ENCODE measurements at regions of chr3 and their contacts with region 1.

Region 1: GRCh38 chr3:37967260-37967881 is 23.2 kb upstream of the VILL start:
- DNase-seq: peak; percentile 71
- CTCF ChIP-seq: peak; percentile 84

Region 2: DNA sequence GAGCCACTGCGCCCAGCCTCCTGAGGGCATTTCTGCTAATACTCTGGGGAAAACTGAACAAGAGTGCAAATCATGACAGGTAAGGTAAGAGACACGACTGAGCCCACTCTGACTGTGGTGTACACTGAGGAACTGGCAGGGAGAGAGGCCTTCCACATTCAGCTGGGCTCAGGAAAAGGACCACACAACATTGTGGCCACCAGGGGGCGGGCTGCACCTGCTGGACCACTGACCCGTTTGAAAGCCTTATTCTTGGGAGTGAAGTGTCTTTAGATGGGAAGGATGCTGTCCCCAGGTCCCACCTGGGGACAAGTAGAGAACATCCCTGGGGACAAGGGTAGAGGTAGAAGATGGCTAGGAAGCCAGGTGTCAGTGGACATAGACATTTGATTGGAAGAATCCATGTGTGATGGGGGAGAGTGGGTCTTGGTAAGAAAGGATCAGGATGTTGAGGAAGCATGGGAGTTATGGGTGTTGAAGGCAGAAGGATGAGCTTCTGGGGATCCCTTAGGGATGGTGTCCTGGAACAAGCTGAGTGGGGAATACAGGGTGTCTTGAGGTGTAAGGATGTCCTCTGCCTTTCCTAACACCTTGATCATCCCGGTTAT is 111.9 kb before region 1 on chr3:
- CTCF ChIA-PET with region 1: interaction called, 331 read pairs
- POLR2A ChIA-PET with region 1: no interaction called
- DNase-seq: peak; percentile 75
- CTCF ChIP-seq: peak; percentile 85

Region 3: GRCh38 chr3:37872413-37873160 is 94.8 kb before region 1 on chr3:
- CTCF ChIA-PET with region 1: interaction called, 12 read pairs
- POLR2A ChIA-PET with region 1: no interaction called
- DNase-seq: no peak
- CTCF ChIP-seq: no peak

Region 4: GRCh38 chr3:37924453-37924852 is 42.9 kb before region 1 on chr3:
- CTCF ChIA-PET with region 1: no interaction called
- POLR2A ChIA-PET with region 1: no interaction called
- DNase-seq: no peak
- CTCF ChIP-seq: no peak

Region 5: DNA sequence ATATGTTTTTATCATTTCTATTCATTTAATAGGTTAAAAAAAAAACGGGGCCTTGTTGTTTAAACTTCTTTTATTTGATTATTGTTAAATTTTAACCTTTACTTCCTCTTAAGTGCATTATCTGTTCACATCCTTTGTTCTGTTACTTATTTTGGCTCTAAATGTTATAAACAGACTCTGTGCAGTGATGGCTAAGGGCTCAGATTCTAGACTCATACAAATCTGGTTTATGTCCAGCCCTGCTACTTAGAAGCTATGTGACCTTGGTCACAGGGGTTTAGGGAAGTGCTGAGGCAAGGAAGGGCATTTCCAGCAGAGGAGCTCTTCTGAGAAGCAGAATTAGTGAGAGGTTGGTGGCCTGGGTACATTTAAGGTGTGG is 32.1 kb before region 1 on chr3:
- CTCF ChIA-PET with region 1: interaction called, 14 read pairs
- POLR2A ChIA-PET with region 1: no interaction called
- DNase-seq: no peak
- CTCF ChIP-seq: no peak

Region 6: DNA sequence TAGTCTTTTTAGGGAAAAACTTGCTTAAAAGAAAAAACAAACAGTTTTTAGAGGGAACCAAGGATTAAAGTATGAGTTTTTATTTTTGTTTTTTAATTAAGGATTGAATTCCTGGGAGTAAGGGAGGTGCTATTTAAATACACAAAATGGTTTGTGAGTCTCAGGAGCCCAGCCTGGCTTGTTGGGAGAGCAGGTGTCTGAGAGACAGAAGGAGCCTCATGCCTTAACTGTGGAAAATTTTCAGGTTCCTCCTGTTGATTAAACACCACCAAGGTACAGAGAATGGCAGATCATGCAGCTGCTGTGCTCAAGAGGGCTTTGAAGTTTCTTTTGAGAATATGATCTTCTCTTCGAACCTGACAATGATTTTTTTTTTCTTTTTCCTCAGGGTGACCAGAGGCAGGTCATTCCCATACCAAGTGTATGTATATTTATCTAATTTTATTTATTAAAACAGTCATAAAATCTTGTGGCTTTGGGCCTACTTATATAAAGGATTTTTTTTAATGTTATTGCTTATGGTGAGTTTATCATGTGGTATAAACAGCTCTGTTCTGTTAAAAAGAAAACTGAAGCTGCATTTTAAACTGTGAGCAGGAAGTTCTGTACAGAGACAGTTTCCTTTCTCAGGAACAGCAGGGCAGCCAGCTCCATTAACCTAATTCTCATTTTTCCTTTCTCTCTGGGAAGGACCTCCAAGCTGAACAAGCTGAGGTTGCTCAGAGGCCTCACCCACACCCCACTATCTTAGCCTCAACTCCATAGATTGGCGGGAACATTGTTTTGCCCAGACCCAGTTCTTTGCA is 10.4 kb before region 1 on chr3:
- CTCF ChIA-PET with region 1: interaction called, 84 read pairs
- POLR2A ChIA-PET with region 1: no interaction called
- DNase-seq: no peak
- CTCF ChIP-seq: no peak

Region 7: DNA sequence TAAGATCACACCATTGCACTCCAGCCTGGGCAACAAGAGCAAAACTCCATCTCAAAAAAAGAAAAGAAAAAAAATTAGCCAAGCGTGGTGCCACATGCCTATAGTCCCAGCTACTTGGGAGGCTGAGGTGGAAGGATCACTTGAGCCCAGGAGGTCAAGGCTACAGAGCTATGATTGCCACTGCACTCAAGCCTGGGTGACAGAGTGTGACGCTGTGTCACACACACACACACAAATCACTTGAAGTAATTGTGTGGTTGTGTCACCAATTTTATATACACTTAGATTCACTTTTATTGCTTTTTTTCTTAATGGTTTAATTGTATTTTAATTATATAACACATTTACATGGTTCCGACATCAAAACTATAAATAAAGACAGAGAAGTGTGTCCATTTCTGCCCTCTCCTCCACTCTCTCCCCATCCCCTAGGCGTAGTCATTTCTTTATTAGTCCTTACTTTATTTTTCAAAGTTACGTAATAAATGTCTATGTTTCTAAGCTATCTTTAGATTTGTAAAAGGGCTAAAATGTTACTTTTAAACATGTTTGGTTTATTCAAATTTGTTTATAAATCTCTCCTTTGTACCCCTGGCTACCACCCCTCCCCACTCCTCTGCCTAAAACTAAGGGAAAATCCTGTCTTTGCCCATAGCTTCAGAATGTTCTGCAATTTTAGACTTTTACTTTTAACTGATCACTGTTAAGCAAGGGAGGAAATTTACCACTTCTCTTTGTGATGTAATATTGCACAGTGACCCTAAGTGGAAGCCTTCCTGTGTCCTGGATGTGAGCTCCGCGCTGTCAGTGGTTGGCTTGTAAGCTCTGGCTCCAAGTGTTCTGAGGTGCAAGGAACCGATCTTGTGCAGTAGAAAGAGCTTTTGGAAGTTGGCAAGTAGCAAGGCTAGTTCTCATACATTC is 12.4 kb after region 1 on chr3:
- CTCF ChIA-PET with region 1: interaction called, 84 read pairs
- POLR2A ChIA-PET with region 1: no interaction called
- DNase-seq: no peak
- CTCF ChIP-seq: no peak

Region 8: GRCh38 chr3:37996785-37997301 is 29.5 kb after region 1 on chr3:
- CTCF ChIA-PET with region 1: interaction called, 11 read pairs
- POLR2A ChIA-PET with region 1: no interaction called
- DNase-seq: peak; percentile 78
- CTCF ChIP-seq: peak; percentile 90

Region 9: DNA sequence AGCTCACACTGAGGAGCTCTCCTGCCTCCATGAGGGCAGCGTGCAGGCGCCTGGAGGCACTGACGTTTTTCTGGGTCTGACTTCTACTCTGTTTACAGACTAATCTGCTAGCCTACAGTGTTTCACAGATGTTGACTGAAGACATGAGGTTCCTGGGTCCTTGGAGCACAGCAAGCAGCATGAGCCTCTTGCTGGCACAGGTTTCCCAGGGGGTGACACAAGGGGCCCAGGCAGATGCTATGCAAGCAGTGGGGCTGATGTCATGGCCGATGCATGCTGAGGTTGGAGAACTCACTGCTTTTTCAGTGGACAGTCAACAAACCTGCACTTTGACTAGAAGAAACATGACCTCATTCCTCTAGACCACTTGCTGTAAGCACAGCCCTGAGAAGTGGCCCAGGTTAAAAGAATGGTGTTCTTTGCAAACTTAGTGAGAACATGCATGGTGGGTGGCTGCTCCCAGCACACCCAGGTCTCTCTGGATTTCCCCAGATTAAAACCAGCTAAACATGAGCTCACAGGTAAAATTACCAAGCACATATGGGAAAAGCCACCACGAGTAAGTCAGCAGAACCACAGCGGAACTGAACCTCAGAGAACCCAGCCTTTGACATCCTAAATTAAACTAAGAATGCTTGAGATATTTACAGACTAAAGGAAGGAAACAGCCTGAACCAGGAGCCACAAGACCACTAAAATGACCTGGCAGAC is 87.1 kb after region 1 on chr3:
- CTCF ChIA-PET with region 1: no interaction called
- POLR2A ChIA-PET with region 1: no interaction called
- DNase-seq: no peak
- CTCF ChIP-seq: no peak